ENCODE measurements at regions of chr12 and their contacts with region 1.

Region 1: DNA sequence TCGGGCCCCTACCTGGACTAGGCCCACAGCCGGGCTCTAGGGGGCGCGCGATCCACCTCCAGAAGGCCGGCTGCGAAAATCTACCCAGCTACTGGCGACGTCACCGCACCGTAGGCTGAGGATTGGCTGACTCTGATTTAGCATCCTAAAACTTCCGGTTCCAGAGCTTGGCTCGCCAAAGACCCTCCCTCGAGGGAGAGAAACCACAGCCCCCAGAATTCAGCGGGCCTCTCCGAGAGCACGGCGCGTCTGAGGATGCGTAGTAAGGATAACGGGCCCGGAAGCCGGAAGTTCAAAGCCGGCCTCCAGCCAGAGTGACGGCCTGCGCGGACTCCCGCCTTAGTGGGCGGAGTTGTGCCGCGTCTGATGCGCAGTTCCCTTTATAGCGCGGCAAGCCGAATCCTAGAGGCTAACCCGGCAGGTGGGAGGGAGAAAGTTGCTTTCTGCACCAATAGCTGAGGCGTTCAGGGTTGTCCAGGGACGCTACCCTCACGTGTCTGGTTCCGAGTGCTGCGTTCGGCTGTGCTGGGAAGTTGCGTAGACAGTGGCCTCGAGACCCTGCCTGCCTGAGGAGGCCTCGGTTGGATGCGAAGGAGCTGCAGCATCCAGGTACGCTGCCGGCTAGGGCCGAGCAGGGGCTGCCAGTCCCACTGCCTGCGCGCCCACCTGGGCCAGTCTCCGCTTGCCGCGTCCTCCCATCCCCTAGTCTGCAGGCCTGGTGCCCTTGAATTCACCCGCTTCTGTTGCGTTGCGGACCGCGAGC is at the start of gene COX14:
- DNase-seq: peak; percentile 97 to 100 (median 99)
- ATAC-seq: peak; percentile 90
- H3K4me3 ChIP-seq: peak within 1 kb of the TSS; percentile 94
- H3K4me3 Mint-ChIP-seq: peak within 1 kb of the TSS; percentile 92 to 100 (median 98)
- H3K27ac ChIP-seq: peak within 1 kb of the TSS; percentile 95
- H3K27ac Mint-ChIP-seq: peak within 1 kb of the TSS; percentile 95 to 99 (median 98)
- H3K4me1 ChIP-seq: peaks cover 14 to 23% of the 10 kb centered on the region in 2 donors
- H3K4me1 Mint-ChIP-seq: peaks cover 15 to 47% (median 40%) of the 10 kb centered on the region in 7 donors
- H3K27me3 ChIP-seq: no peaks in the 10 kb centered on the region
- H3K27me3 Mint-ChIP-seq: no peaks in the 10 kb centered on the region
- total RNA-seq, gene COX14: 37.2 to 49.4 (median 46.9) TPM

Region 2: GRCh38 chr12:48716493-48717251 is 1395.2 kb before region 1 on chr12 and contains the start of gene CCNT1:
- CTCF ChIA-PET with region 1: no interaction called
- POLR2A ChIA-PET with region 1: no interaction called
- intact Hi-C with region 1: loop called in 1 of 2 experiments (anchors 2 kb)
- DNase-seq: peak; percentile 90 to 100 (median 99)
- ATAC-seq: peak; percentile 93
- H3K4me3 ChIP-seq: peak within 1 kb of the TSS; percentile 88
- H3K4me3 Mint-ChIP-seq: peak within 1 kb of the TSS; percentile 89 to 98 (median 94)
- H3K27ac ChIP-seq: peak within 1 kb of the TSS; percentile 95
- H3K27ac Mint-ChIP-seq: peak within 1 kb of the TSS; percentile 95 to 99 (median 98)
- H3K4me1 ChIP-seq: peaks cover 14 to 24% of the 10 kb centered on the region in 2 donors
- H3K4me1 Mint-ChIP-seq: peaks cover 21 to 50% (median 37%) of the 10 kb centered on the region in 7 donors
- H3K27me3 ChIP-seq: no peaks in the 10 kb centered on the region
- H3K27me3 Mint-ChIP-seq: peaks cover 0 to 4% (median 0%) of the 10 kb centered on the region in 5 donors
- total RNA-seq, gene CCNT1: 62.5 to 127 (median 76.6) TPM

Region 3: DNA sequence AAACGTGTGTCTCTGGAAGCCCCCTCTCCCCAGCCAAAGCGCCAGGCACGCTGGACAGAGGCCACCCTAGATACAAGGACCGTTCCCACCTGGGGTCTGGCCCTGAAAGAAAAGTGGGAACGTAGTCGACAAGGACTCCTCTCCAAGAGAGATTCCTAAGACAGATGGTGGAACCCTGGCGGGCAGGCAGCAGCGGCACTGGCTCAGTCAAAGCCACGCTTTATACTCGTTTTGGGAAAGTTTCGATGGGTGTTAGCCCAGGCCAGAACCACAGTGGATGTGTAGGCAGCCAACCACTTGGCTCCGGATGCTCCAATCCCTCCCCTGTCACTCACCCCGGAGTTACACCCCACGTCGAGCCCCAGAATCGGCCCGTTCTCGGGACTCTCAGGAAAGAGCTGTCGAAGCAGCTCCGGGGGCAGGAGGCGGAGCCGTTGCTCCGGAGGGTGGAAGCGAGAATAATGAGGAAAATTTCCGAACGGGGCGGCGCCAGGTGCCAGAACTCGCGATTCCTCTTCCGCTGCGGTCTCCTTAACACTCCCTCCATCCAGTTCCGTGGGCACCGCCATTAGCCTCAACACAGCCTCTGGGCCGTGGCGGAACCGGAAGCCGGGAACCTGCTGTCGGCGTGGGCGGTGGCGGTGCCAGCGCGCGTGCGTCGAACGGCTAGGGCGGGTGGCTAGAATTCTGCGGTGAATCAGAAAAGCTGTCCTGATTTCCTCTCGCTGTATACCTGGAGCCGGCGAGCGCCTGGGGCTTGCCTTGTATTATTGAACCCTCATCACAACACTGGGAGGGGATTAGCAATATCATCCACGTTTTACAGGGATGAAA is 269.1 kb before region 1 on chr12 and contains the start of gene BCDIN3D:
- CTCF ChIA-PET with region 1: no interaction called
- POLR2A ChIA-PET with region 1: no interaction called
- intact Hi-C with region 1: loop called in 1 of 2 experiments (anchors 1 kb)
- DNase-seq: peak; percentile 83 to 95 (median 91)
- ATAC-seq: peak; percentile 96
- H3K4me3 ChIP-seq: peak within 1 kb of the TSS; percentile 73
- H3K4me3 Mint-ChIP-seq: peak within 1 kb of the TSS; percentile 85 to 100 (median 94)
- H3K27ac ChIP-seq: peak within 1 kb of the TSS; percentile 80
- H3K27ac Mint-ChIP-seq: peak within 1 kb of the TSS; percentile 90 to 98 (median 96)
- H3K4me1 ChIP-seq: peaks cover 12 to 20% of the 10 kb centered on the region in 2 donors
- H3K4me1 Mint-ChIP-seq: peaks cover 19 to 65% (median 43%) of the 10 kb centered on the region in 7 donors
- H3K27me3 ChIP-seq: no peaks in the 10 kb centered on the region
- H3K27me3 Mint-ChIP-seq: no peaks in the 10 kb centered on the region
- total RNA-seq, gene BCDIN3D: 3.7 to 17.4 (median 6.8) TPM

Region 4: DNA sequence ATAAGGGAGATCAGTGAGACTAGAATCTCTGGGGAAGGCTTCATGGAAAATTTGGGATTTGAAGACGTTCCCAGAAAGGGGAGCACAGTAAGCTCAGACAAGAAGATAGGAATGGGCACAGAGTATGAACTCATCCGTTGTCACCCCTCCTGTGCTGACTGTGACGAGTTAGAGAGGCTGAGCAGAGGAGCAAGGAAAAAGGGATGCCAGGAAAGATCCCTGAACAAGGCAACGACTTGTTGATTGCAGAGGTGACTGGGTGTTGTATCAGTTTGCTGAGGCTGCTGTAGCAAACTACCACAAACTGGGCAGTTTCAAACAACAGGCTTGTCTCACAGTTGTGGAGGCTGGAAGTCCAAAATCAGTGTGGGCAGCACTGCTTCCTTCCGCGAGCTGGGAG is 13.9 kb before region 1 on chr12:
- CTCF ChIA-PET with region 1: interaction called, 9 read pairs
- POLR2A ChIA-PET with region 1: interaction called, 26 read pairs
- intact Hi-C with region 1: no loop called
- DNase-seq: no peak
- ATAC-seq: no peak
- H3K4me3 ChIP-seq: no peak overlapping the region
- H3K4me3 Mint-ChIP-seq: no peak overlapping the region
- H3K27ac ChIP-seq: no peak overlapping the region
- H3K27ac Mint-ChIP-seq: peak overlapping the region in 1 of 9 donors; percentile 12
- H3K4me1 ChIP-seq: no peaks in the 10 kb centered on the region
- H3K4me1 Mint-ChIP-seq: peaks cover 0 to 5% (median 0%) of the 10 kb centered on the region in 7 donors
- H3K27me3 ChIP-seq: peaks cover 0 to 3% of the 10 kb centered on the region in 2 donors
- H3K27me3 Mint-ChIP-seq: no peaks in the 10 kb centered on the region

Region 5: GRCh38 chr12:50174971-50175715 is 63.3 kb after region 1 on chr12:
- CTCF ChIA-PET with region 1: interaction called, 18 read pairs
- POLR2A ChIA-PET with region 1: interaction called, 7 read pairs
- intact Hi-C with region 1: loop called in 1 of 2 experiments (anchors 1 kb)
- DNase-seq: peak in 7 of 9 donors; percentile 25 to 67 (median 56)
- ATAC-seq: peak; percentile 63
- H3K4me3 ChIP-seq: no peak overlapping the region
- H3K4me3 Mint-ChIP-seq: no peak overlapping the region
- H3K27ac ChIP-seq: no peak overlapping the region
- H3K27ac Mint-ChIP-seq: peak overlapping the region in 5 of 9 donors; percentile 3 to 71 (median 32)
- H3K4me1 ChIP-seq: no peaks in the 10 kb centered on the region
- H3K4me1 Mint-ChIP-seq: peaks cover 0 to 5% (median 0%) of the 10 kb centered on the region in 7 donors
- H3K27me3 ChIP-seq: no peaks in the 10 kb centered on the region
- H3K27me3 Mint-ChIP-seq: no peaks in the 10 kb centered on the region

Region 6: GRCh38 chr12:51025836-51026638 is 914.2 kb after region 1 on chr12 and contains the start of gene SLC11A2:
- CTCF ChIA-PET with region 1: no interaction called
- POLR2A ChIA-PET with region 1: no interaction called
- intact Hi-C with region 1: loop called in 1 of 2 experiments (anchors 10 kb)
- DNase-seq: peak; percentile 79 to 93 (median 88)
- ATAC-seq: peak; percentile 96
- H3K4me3 ChIP-seq: peak within 1 kb of the TSS; percentile 86
- H3K4me3 Mint-ChIP-seq: peak within 1 kb of the TSS; percentile 91 to 100 (median 98)
- H3K27ac ChIP-seq: peak within 1 kb of the TSS; percentile 80
- H3K27ac Mint-ChIP-seq: peak within 1 kb of the TSS; percentile 90 to 99 (median 97)
- H3K4me1 ChIP-seq: peaks cover 14 to 22% of the 10 kb centered on the region in 2 donors
- H3K4me1 Mint-ChIP-seq: peaks cover 39 to 65% (median 54%) of the 10 kb centered on the region in 7 donors
- H3K27me3 ChIP-seq: no peaks in the 10 kb centered on the region
- H3K27me3 Mint-ChIP-seq: peaks cover 0 to 13% (median 0%) of the 10 kb centered on the region in 5 donors
- total RNA-seq, gene SLC11A2: 49.3 to 65.4 (median 61.0) TPM

Measured in naive thymus-derived CD4-positive, alpha-beta T cell (primary cell).